Esophagus muscularis mucosa (tissue), 4 donors: ENCODE measurements at regions of chr5 and their contacts with region 1.

Region 1: GRCh38 chr5:34486160-34486848 is 169.8 kb upstream of the RAI14 start:
- DNase-seq: peak; percentile 95
- H3K4me3 ChIP-seq: no peak overlapping the region
- H3K27ac ChIP-seq: peak overlapping the region; percentile 79 to 82 (median 80)
- H3K4me1 ChIP-seq: peaks cover 12 to 27% (median 25%) of the 10 kb centered on the region in 4 donors
- H3K27me3 ChIP-seq: no peaks in the 10 kb centered on the region
- CTCF ChIP-seq: peak; percentile 82 to 87 (median 86)
- EP300 ChIP-seq: no peak
- POLR2A ChIP-seq: no peak

Region 2: GRCh38 chr5:34620185-34620584 is 133.9 kb after region 1 on chr5:
- intact Hi-C with region 1: no loop called
- DNase-seq: no peak
- H3K4me3 ChIP-seq: no peak overlapping the region
- H3K27ac ChIP-seq: peak overlapping the region in 1 of 4 donors; percentile 48
- H3K4me1 ChIP-seq: peaks cover 0 to 19% (median 10%) of the 10 kb centered on the region in 4 donors
- H3K27me3 ChIP-seq: no peaks in the 10 kb centered on the region
- CTCF ChIP-seq: no peak
- EP300 ChIP-seq: no peak
- POLR2A ChIP-seq: no peak

Region 3: DNA sequence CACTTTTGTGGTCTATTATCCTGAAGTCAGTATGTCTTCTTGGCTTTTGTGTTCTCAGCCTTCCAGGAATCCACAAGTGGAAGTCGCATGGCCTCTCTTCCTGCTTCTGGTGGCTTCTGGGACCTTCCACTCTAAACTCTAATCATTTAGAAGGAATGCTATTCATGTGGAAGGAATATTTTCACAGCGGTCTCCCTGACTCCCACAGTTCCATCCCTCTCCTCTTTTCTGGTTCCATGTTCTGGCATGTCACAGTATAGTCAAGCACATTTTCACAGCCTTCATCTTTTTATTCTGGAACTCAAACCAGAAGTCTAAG is 162.5 kb after region 1 on chr5:
- intact Hi-C with region 1: no loop called
- DNase-seq: no peak
- H3K4me3 ChIP-seq: no peak overlapping the region
- H3K27ac ChIP-seq: no peak overlapping the region
- H3K4me1 ChIP-seq: peaks cover 0 to 10% (median 4%) of the 10 kb centered on the region in 4 donors
- H3K27me3 ChIP-seq: no peaks in the 10 kb centered on the region
- CTCF ChIP-seq: no peak
- EP300 ChIP-seq: no peak
- POLR2A ChIP-seq: no peak

Region 4: DNA sequence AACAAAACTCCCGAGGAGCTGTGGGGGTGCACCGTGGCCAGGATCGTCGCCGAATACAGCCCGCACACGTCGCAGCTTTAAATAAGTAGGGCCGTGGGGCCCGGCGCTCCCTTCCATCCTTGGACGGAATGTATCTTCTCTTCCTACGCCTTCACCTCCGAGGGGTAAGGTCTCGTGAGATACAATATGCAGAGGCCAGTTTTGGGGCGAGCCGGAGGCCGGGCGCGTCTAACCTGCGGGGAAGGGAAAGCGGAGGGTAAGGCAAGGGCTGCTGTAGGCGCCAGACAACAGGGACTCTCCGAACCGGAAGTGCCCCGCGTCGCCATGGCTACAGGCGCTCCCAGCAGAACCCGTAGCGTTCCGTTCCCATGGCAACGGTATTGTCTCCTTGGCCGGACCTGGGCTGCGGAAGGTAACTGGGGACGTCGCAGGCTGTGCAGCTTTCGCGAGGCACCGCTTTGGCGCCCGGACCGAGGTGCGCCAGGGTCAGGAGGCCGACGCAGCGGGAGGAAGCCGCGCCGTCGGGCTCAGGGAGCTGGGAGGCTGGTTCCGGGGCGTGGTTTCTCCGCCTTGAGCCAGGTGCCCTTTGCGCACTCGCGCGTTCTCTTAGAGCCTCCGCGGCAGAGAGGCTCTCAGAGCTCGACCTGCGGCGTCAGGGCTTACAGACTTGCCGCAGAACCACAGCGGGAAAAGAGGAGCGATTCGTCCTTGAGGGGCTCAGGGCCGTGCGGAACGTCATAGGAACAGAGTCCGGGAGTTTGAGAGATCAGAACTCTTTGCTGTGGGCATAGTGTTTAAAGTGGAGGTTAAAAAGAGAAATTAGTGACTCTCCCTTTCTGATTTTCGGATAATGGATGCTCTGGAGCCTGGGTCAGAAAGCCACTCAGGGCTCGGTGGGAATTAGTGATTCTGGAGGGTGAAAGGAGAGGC is 352.7 kb after region 1 on chr5 and contains the start of gene TTC23L:
- intact Hi-C with region 1: loop called (anchors 5 kb)
- DNase-seq: peak; percentile 95
- H3K4me3 ChIP-seq: peak within 1 kb of the TSS; percentile 62 to 87 (median 76)
- H3K27ac ChIP-seq: peak within 1 kb of the TSS; percentile 66 to 78 (median 76)
- H3K4me1 ChIP-seq: peaks cover 3 to 14% (median 12%) of the 10 kb centered on the region in 4 donors
- H3K27me3 ChIP-seq: no peaks in the 10 kb centered on the region
- CTCF ChIP-seq: no peak
- EP300 ChIP-seq: no peak
- POLR2A ChIP-seq: no peak
- total RNA-seq, gene TTC23L: not detected

Region 5: GRCh38 chr5:34898258-34898895 is 412.1 kb after region 1 on chr5:
- intact Hi-C with region 1: loop called (anchors 2 kb)
- DNase-seq: no peak
- H3K4me3 ChIP-seq: no peak overlapping the region
- H3K27ac ChIP-seq: no peak overlapping the region
- H3K4me1 ChIP-seq: peaks cover 0 to 4% (median 0%) of the 10 kb centered on the region in 4 donors
- H3K27me3 ChIP-seq: no peaks in the 10 kb centered on the region
- CTCF ChIP-seq: peak; percentile 75 to 88 (median 85)
- EP300 ChIP-seq: no peak
- POLR2A ChIP-seq: no peak